ENCODE measurements at regions of chr5 and their contacts with region 1.

Region 1: GRCh38 chr5:101663554-101663953 is 632.5 kb downstream of the SLCO4C1 start:
- DNase-seq: no peak
- H3K4me3 Mint-ChIP-seq: no peak overlapping the region
- H3K27ac Mint-ChIP-seq: no peak overlapping the region
- H3K4me1 Mint-ChIP-seq: peaks cover 6% of the 10 kb centered on the region
- H3K27me3 Mint-ChIP-seq: peaks cover 24% of the 10 kb centered on the region
- CTCF ChIP-seq: no peak

Region 2: GRCh38 chr5:101517795-101518194 is 145.8 kb before region 1 on chr5:
- CTCF ChIA-PET with region 1: no interaction called
- POLR2A ChIA-PET with region 1: no interaction called
- intact Hi-C with region 1: no loop called
- DNase-seq: no peak
- H3K4me3 Mint-ChIP-seq: no peak overlapping the region
- H3K27ac Mint-ChIP-seq: no peak overlapping the region
- H3K4me1 Mint-ChIP-seq: no peaks in the 10 kb centered on the region
- H3K27me3 Mint-ChIP-seq: no peaks in the 10 kb centered on the region
- CTCF ChIP-seq: no peak

Region 3: GRCh38 chr5:101647861-101648260 is 15.7 kb before region 1 on chr5:
- CTCF ChIA-PET with region 1: no interaction called
- POLR2A ChIA-PET with region 1: no interaction called
- intact Hi-C with region 1: no loop called
- DNase-seq: no peak
- H3K4me3 Mint-ChIP-seq: no peak overlapping the region
- H3K27ac Mint-ChIP-seq: no peak overlapping the region
- H3K4me1 Mint-ChIP-seq: no peaks in the 10 kb centered on the region
- H3K27me3 Mint-ChIP-seq: peaks cover 6% of the 10 kb centered on the region
- CTCF ChIP-seq: no peak

Region 4: DNA sequence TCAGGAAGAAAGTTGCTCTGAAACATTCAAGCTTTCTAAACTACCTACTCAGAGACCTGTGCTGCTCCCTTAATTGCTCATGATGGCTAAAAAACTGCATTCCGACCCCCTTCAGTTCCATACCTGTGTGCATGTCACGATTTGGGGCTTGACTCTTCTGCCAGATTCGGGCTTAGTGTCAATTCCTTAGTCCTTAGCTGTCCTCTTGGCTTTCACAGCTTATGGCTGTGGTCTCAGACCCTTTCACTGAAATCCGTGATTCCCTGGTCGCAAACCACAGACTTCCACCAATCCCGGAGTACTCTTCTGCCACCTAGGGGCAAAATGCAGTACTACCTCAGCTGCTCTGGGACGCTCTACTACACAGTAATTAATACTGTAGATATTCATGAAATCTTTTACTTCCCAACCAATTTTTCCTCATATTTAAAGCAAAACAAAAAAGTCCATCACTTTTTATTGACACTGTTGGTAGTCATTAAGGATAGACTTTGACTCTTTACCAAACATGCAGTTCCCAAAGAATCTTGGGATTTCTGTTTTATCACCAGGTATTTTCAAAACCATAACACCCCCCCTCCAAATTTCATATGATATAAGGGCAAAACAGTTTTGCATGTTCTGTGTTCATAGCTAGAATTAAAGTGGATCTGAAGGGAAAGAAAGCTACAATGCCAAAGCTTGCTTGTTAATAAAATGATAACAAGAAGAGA is 15.1 kb after region 1 on chr5:
- CTCF ChIA-PET with region 1: interaction called, 15 read pairs
- POLR2A ChIA-PET with region 1: no interaction called
- intact Hi-C with region 1: no loop called
- DNase-seq: peak; percentile 66
- H3K4me3 Mint-ChIP-seq: no peak overlapping the region
- H3K27ac Mint-ChIP-seq: no peak overlapping the region
- H3K4me1 Mint-ChIP-seq: peaks cover 27% of the 10 kb centered on the region
- H3K27me3 Mint-ChIP-seq: peaks cover 24% of the 10 kb centered on the region
- CTCF ChIP-seq: peak; percentile 89